Caco-2 (cell line): ENCODE measurements at regions of chr6 and their contacts with region 1.

Region 1: DNA sequence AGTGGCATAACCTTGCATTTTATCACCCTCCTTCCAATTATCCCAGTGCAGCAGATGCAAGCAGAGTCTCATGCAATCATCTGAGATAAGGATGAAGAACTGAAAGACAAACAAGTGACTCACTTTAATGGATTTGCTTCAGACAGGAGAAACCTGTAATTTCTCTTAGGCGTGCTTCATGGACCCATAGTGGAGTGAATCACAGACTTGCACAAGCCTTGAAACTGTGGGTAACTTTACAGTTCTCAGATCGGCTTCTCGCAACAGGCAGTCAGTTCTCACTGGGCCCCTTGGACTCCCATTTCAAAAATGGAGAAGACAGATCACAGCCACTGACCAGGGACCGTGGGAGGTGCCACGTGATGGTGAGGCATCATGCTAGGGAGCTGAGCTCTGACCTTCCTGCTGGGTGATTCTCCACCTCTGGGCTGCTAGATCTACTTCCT is at the start of gene ADGRF4:
- DNase-seq: peak; percentile 80 to 85
- H3K4me3 ChIP-seq: peak within 1 kb of the TSS; percentile 21
- H3K4me3 Mint-ChIP-seq: peak within 1 kb of the TSS; percentile 80
- H3K27ac Mint-ChIP-seq: peak within 1 kb of the TSS; percentile 98
- H3K4me1 ChIP-seq: peaks cover 42% of the 10 kb centered on the region
- H3K4me1 Mint-ChIP-seq: peaks cover 38% of the 10 kb centered on the region
- H3K27me3 ChIP-seq: no peaks in the 10 kb centered on the region
- H3K27me3 Mint-ChIP-seq: no peaks in the 10 kb centered on the region
- CTCF ChIP-seq: no peak
- total RNA-seq, gene ADGRF4: 10.6 and 11.2 TPM in 2 replicates

Region 2: DNA sequence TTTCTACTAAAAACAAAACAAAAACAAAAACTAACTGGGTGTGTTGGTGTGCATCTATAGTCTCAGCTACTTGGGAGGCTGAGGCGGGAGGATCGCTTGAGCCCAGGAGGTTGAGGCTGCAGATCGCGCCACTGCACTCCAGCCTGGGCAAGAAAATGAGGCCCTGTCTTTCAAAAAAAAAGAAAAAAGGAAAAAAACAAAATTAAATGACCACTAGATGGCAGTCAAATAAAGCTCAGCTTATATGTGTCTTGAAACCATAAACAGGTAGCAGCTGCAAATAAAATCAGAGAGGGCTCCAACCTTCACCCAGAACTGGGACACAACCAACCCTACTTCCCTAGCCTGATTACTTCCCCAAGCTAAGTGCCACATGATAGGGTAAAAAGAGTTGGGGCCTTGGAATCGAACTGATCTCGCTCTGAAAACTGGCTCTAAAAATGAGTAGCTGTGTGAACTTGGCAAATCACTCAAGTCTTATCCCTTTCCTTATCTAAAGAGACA is 67.0 kb before region 1 on chr6:
- CTCF ChIA-PET with region 1: interaction called, 4 read pairs
- POLR2A ChIA-PET with region 1: no interaction called
- intact Hi-C with region 1: loop called (anchors 1 kb)
- DNase-seq: peak in 1 of 2 experiments; percentile 53
- H3K4me3 ChIP-seq: no peak overlapping the region
- H3K4me3 Mint-ChIP-seq: no peak overlapping the region
- H3K27ac Mint-ChIP-seq: peak overlapping the region; percentile 84
- H3K4me1 ChIP-seq: peaks cover 42% of the 10 kb centered on the region
- H3K4me1 Mint-ChIP-seq: peaks cover 27% of the 10 kb centered on the region
- H3K27me3 ChIP-seq: no peaks in the 10 kb centered on the region
- H3K27me3 Mint-ChIP-seq: no peaks in the 10 kb centered on the region
- CTCF ChIP-seq: peak; percentile 46 to 68

Region 3: GRCh38 chr6:47646567-47647088 is 51.7 kb before region 1 on chr6:
- CTCF ChIA-PET with region 1: no interaction called
- POLR2A ChIA-PET with region 1: no interaction called
- intact Hi-C with region 1: loop called (anchors 2 kb)
- DNase-seq: no peak
- H3K4me3 ChIP-seq: no peak overlapping the region
- H3K4me3 Mint-ChIP-seq: no peak overlapping the region
- H3K27ac Mint-ChIP-seq: no peak overlapping the region
- H3K4me1 ChIP-seq: peaks cover 26% of the 10 kb centered on the region
- H3K4me1 Mint-ChIP-seq: peaks cover 15% of the 10 kb centered on the region
- H3K27me3 ChIP-seq: no peaks in the 10 kb centered on the region
- H3K27me3 Mint-ChIP-seq: no peaks in the 10 kb centered on the region
- CTCF ChIP-seq: peak in 1 of 2 experiments; percentile 8

Region 4: GRCh38 chr6:47655719-47656595 is 42.4 kb before region 1 on chr6:
- CTCF ChIA-PET with region 1: no interaction called
- POLR2A ChIA-PET with region 1: interaction called, 4 read pairs
- intact Hi-C with region 1: loop called (anchors 2 kb)
- DNase-seq: peak; percentile 71 to 78
- H3K4me3 ChIP-seq: no peak overlapping the region
- H3K4me3 Mint-ChIP-seq: peak overlapping the region; percentile 43
- H3K27ac Mint-ChIP-seq: no peak overlapping the region
- H3K4me1 ChIP-seq: peaks cover 15% of the 10 kb centered on the region
- H3K4me1 Mint-ChIP-seq: peaks cover 9% of the 10 kb centered on the region
- H3K27me3 ChIP-seq: no peaks in the 10 kb centered on the region
- H3K27me3 Mint-ChIP-seq: no peaks in the 10 kb centered on the region
- CTCF ChIP-seq: no peak

Region 5: GRCh38 chr6:47669684-47670513 is 28.5 kb before region 1 on chr6:
- CTCF ChIA-PET with region 1: interaction called, 3 read pairs
- POLR2A ChIA-PET with region 1: no interaction called
- intact Hi-C with region 1: loop called (anchors 1 kb)
- DNase-seq: peak in 1 of 2 experiments; percentile 47
- H3K4me3 ChIP-seq: no peak overlapping the region
- H3K4me3 Mint-ChIP-seq: peak overlapping the region; percentile 64
- H3K27ac Mint-ChIP-seq: peak overlapping the region; percentile 74
- H3K4me1 ChIP-seq: peaks cover 15% of the 10 kb centered on the region
- H3K4me1 Mint-ChIP-seq: peaks cover 9% of the 10 kb centered on the region
- H3K27me3 ChIP-seq: no peaks in the 10 kb centered on the region
- H3K27me3 Mint-ChIP-seq: no peaks in the 10 kb centered on the region
- CTCF ChIP-seq: no peak

Region 6: GRCh38 chr6:47733879-47734558 is 35.7 kb after region 1 on chr6:
- CTCF ChIA-PET with region 1: interaction called, 3 read pairs
- POLR2A ChIA-PET with region 1: interaction called, 10 read pairs
- intact Hi-C with region 1: no loop called
- DNase-seq: peak in 1 of 2 experiments; percentile 54
- H3K4me3 ChIP-seq: no peak overlapping the region
- H3K4me3 Mint-ChIP-seq: no peak overlapping the region
- H3K27ac Mint-ChIP-seq: no peak overlapping the region
- H3K4me1 ChIP-seq: no peaks in the 10 kb centered on the region
- H3K4me1 Mint-ChIP-seq: no peaks in the 10 kb centered on the region
- H3K27me3 ChIP-seq: no peaks in the 10 kb centered on the region
- H3K27me3 Mint-ChIP-seq: no peaks in the 10 kb centered on the region
- CTCF ChIP-seq: peak; percentile 46 to 56